GM12878 (cell line): ENCODE measurements at regions of chr2 and their contacts with region 1.

Region 1: DNA sequence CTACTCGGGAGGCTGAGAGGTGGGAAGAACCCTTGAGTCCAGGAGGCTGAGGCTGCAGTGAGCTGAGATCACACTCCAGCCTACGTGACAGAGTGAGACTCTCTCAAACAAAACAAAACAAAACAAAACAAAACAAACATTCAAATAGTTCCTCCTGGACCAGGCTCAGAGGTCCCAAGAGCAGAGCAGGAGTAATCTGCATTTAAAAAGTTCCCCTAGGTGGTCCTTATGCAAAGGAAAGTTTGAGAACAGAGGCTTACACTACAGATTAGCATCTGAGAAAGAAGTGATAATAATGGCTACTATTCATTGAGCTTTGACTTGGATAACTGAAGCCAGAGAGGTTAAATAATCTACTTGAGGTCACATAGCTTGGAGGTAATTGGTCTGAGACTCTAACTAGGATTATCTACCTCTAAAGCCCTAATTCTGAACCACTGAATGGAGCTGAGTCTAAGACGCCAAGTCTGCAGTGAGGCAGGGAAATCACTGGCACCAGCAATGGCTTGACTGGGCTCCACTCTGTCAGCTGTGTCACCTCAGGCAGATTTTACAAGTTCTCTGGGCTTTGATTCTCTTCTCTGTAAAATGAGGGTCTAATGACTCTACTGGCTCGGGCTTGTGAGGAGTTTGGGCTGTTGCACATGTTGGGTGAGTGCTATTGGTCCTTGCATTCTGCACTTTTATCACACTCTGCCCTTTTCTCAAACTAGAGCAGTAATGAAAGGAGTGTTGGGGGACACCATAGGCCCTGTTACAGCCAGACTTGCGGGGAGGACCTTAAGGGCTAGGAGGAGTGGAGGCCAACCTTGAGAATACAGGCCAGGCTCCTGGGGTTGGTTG is 29.2 kb upstream of the DLX2 start:
- DNase-seq: no peak
- ATAC-seq: no peak
- H3K4me3 ChIP-seq: no peak overlapping the region
- H3K27ac ChIP-seq: no peak overlapping the region
- H3K4me1 ChIP-seq: no peaks in the 10 kb centered on the region
- H3K27me3 ChIP-seq: peaks cover 0 to 2% of the 10 kb centered on the region in 2 experiments; a peak in 2 of 4 replicates
- CTCF ChIP-seq: no peak
- EP300 ChIP-seq: no peak
- POLR2A ChIP-seq: no peak
- RAD21 ChIP-seq: no peak

Region 2: DNA sequence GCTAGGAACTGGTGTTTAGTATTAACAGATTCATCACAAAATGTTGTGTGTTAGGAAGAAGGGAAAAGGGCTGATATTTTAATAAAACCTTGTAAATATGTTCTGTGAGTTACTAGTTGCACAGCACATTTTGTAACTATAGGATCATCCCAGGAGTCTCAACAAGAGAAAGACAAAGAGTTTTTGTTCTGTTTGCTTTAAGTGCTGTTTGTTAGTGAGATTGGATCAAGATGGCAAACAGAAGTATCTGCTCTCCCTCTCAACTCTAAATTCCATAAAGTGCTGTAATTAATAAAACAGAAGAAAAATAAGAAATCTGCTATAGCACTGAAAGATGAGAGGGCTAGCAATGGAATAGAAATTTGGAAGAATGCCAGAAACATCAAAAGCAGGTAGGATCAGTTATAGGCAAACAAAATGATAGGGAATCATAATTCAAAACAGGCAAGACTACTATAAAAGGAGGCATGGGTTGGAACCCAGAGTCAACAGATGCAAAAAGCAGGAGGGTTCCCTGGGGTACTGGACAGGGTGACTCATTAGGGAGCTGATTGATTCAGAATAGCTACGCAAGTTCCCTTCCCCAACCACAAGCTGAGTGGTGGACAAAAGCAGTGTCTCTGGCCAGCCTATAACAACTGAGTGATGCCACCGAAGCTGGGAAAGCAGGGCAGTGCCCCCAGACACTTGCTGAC is 368.9 kb before region 1 on chr2:
- CTCF ChIA-PET with region 1: no interaction called
- POLR2A ChIA-PET with region 1: no interaction called
- RAD21 ChIA-PET with region 1: no interaction called
- SMC1A ChIA-PET with region 1: no interaction called
- in situ Hi-C with region 1: no loop called
- intact Hi-C with region 1: no loop called
- DNase-seq: no peak
- ATAC-seq: no peak
- H3K4me3 ChIP-seq: no peak overlapping the region
- H3K27ac ChIP-seq: no peak overlapping the region
- H3K4me1 ChIP-seq: no peaks in the 10 kb centered on the region
- H3K27me3 ChIP-seq: no peaks in the 10 kb centered on the region
- CTCF ChIP-seq: no peak
- EP300 ChIP-seq: no peak
- POLR2A ChIP-seq: no peak
- RAD21 ChIP-seq: no peak

Region 3: GRCh38 chr2:172084734-172085459 is 47.0 kb before region 1 on chr2:
- CTCF ChIA-PET with region 1: no interaction called
- POLR2A ChIA-PET with region 1: no interaction called
- RAD21 ChIA-PET with region 1: no interaction called
- SMC1A ChIA-PET with region 1: no interaction called
- in situ Hi-C with region 1: no loop called
- intact Hi-C with region 1: no loop called
- DNase-seq: no peak
- ATAC-seq: peak; percentile 89
- H3K4me3 ChIP-seq: peak overlapping the region; percentile 69
- H3K27ac ChIP-seq: no peak overlapping the region
- H3K4me1 ChIP-seq: peaks cover 17% of the 10 kb centered on the region
- H3K27me3 ChIP-seq: peaks cover 47 to 68% of the 10 kb centered on the region in 2 experiments
- CTCF ChIP-seq: no peak
- EP300 ChIP-seq: no peak
- POLR2A ChIP-seq: peak; percentile 52; the same call in 1 of the 2 replicates
- RAD21 ChIP-seq: no peak

Region 4: DNA sequence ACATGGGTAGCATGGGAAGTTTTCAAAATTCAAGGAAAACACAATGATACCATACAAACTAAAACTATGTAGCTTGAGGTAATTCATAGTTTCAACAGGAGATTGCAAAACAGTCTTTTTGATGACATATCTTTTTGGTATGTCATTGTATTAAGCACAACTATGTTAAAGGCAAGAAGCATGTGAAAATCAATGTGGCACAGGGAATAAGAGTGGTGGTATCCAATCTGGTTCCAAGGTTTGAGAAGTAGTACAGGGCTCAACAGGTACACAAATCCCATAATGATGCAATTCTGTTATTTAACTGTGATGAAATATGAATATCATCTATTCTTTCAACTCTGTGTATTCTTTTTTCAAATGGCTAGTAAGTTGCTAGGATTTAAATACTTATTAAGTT is 12.8 kb before region 1 on chr2:
- CTCF ChIA-PET with region 1: interaction called, 11 read pairs
- POLR2A ChIA-PET with region 1: no interaction called
- RAD21 ChIA-PET with region 1: no interaction called
- SMC1A ChIA-PET with region 1: interaction called, 5 read pairs
- in situ Hi-C with region 1: no loop called
- intact Hi-C with region 1: no loop called
- DNase-seq: no peak
- ATAC-seq: no peak
- H3K4me3 ChIP-seq: no peak overlapping the region
- H3K27ac ChIP-seq: no peak overlapping the region
- H3K4me1 ChIP-seq: no peaks in the 10 kb centered on the region
- H3K27me3 ChIP-seq: no peaks in the 10 kb centered on the region
- CTCF ChIP-seq: no peak
- EP300 ChIP-seq: no peak
- POLR2A ChIP-seq: no peak
- RAD21 ChIP-seq: no peak

Region 5: GRCh38 chr2:172147944-172148650 is 16.2 kb after region 1 on chr2:
- CTCF ChIA-PET with region 1: no interaction called
- POLR2A ChIA-PET with region 1: no interaction called
- RAD21 ChIA-PET with region 1: no interaction called
- SMC1A ChIA-PET with region 1: no interaction called
- in situ Hi-C with region 1: no loop called
- intact Hi-C with region 1: no loop called
- DNase-seq: no peak
- ATAC-seq: no peak
- H3K4me3 ChIP-seq: no peak overlapping the region
- H3K27ac ChIP-seq: no peak overlapping the region
- H3K4me1 ChIP-seq: no peaks in the 10 kb centered on the region
- H3K27me3 ChIP-seq: no peaks in the 10 kb centered on the region; a peak in 2 of 4 replicates
- CTCF ChIP-seq: no peak
- EP300 ChIP-seq: no peak
- POLR2A ChIP-seq: no peak
- RAD21 ChIP-seq: no peak